ENCODE measurements at regions of chr3 and their contacts with region 1.

Region 1: GRCh38 chr3:122942937-122943827 is 84.4 kb downstream of the SEMA5B start:
- DNase-seq: peak; percentile 72 to 73
- ATAC-seq: peak; percentile 75 to 92 (median 82)
- H3K4me3 ChIP-seq: no peak overlapping the region
- H3K27ac ChIP-seq: peak overlapping the region in 2 of 10 donors; percentile 22 to 48
- H3K4me1 ChIP-seq: peaks cover 0 to 52% (median 25%) of the 10 kb centered on the region in 9 donors
- H3K27me3 ChIP-seq: peaks cover 0 to 4% (median 0%) of the 10 kb centered on the region in 7 donors
- CTCF ChIP-seq: peak; percentile 66 to 96 (median 89)

Region 2: DNA sequence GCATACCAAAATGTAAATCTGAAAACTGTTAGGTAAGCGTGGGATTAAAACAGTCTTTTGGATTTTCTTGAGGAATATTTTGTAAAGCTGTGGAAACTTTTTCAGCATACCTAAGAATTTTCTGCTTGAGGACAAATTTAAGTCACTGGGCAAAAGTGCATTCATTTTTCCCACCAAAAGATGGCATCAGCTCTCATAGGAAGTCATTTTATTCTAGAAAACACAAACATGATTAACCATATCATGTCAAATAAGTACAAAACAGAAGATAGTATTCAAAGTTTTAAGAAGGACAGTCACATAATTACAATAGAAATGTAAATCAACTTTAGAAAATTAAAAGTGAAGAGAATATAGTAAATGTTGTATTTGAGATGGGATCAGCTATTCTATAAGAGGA is 84.8 kb before region 1 on chr3:
- intact Hi-C with region 1: no loop called
- DNase-seq: no peak
- ATAC-seq: no peak
- H3K4me3 ChIP-seq: no peak overlapping the region
- H3K27ac ChIP-seq: no peak overlapping the region
- H3K4me1 ChIP-seq: peaks cover 0 to 3% (median 0%) of the 10 kb centered on the region in 9 donors
- H3K27me3 ChIP-seq: no peaks in the 10 kb centered on the region
- CTCF ChIP-seq: peak in 7 of 9 donors; percentile 16 to 59 (median 50)

Region 3: DNA sequence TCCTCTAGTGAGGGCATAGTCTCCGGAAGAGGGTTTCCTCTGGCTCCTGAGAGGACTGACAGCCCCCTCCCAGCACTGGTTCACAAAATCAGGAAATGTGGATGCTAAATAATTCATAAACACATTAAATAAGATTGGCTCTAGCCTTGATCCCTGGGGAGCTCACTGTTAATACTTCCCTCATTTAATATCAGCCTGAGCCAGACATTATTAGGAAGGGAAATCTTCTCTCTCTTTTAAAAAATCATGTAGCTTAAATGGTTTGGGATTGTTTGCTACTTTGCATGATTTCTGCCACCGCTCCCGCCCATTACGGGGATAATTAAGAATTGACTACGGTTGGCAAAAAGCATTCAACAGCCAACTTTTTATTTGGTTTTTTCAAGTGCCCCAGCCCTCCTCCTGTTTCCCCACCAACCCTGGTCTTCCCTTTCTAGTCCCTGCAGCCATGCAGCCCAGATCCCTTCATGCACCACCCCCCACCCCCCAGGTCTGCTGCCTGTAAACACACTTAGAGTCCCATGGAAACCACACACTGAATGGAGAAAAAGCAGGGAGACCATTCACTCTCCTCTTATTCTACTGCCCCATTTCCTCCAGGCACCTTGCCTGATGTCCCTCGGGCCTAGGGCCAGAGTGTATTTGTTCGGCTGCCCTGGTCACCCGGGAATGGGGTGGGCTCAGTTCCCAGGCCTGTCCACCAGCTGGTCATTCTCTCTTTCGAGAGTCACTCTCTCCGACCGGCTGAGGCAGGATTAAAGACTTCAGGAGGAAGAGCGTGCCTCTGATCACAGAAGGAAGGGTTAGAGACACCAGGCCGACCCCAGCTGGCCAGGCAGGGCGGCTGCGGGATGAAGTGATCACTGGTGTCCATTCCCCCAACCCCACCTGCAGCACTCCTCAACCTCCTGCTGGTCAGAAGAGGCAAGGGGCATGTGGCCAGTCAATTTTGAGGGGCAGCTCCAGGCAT is 39.3 kb after region 1 on chr3:
- intact Hi-C with region 1: loop called in 1 of 10 experiments (anchors 5 kb)
- DNase-seq: peak; percentile 54
- ATAC-seq: peak in 5 of 8 donors; percentile 13 to 56 (median 28)
- H3K4me3 ChIP-seq: no peak overlapping the region
- H3K27ac ChIP-seq: peak overlapping the region in 2 of 10 donors; percentile 22 to 30
- H3K4me1 ChIP-seq: peaks cover 6 to 70% (median 30%) of the 10 kb centered on the region in 9 donors
- H3K27me3 ChIP-seq: no peaks in the 10 kb centered on the region
- CTCF ChIP-seq: peak in 5 of 9 donors; percentile 12 to 39 (median 25)

Region 4: DNA sequence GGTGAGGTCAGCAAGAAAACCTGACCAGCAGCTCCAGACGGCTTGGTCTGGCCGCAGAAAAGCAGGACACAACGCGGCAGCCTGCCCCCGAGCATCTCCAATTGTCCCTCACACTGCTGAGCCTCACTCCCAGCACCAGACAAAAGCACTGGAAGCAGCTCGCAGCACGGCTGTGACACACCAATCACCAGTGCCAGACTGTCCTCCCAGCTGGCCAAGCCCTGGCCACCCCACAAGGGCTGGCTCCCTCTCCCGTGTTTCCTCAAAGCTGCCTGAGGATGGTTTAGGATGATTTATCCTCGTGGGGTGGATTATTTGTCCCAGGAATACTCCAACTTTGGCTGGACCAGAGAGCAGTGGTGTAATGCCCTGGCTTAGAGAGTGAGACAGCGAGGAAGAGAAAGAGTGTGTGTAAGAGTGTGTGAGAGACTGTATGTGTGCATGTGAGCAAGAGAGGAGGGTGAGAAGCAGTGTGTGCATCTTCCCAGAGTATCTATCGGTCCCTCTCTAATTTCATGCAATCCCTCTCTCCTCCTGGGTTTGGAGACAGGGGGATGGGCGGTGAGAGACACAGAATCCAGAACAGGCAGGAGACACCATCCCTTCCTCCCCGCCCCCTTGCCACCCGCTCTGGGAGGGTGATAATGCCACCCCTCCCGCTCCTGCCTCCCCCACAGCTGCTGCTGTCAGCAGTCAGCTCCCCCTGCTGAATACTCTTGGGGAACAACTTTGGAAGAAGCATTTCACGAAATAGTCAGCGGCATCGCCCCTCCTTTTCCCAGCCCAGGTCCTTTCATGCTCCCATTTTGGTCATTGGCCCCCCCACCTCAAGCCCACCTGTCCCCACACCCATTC is 50.2 kb after region 1 on chr3:
- intact Hi-C with region 1: loop called in 1 of 10 experiments (anchors 5 kb)
- DNase-seq: no peak
- ATAC-seq: peak in 5 of 8 donors; percentile 18 to 55 (median 31)
- H3K4me3 ChIP-seq: no peak overlapping the region
- H3K27ac ChIP-seq: no peak overlapping the region
- H3K4me1 ChIP-seq: peaks cover 0 to 56% (median 28%) of the 10 kb centered on the region in 9 donors
- H3K27me3 ChIP-seq: peaks cover 0 to 14% (median 0%) of the 10 kb centered on the region in 7 donors
- CTCF ChIP-seq: no peak

Region 5: GRCh38 chr3:123258811-123259420 is 315.7 kb after region 1 on chr3:
- intact Hi-C with region 1: loop called (anchors 5 to 10 kb)
- DNase-seq: no peak
- ATAC-seq: peak in 5 of 8 donors; percentile 51 to 76 (median 64)
- H3K4me3 ChIP-seq: no peak overlapping the region
- H3K27ac ChIP-seq: no peak overlapping the region
- H3K4me1 ChIP-seq: peaks cover 0 to 10% (median 0%) of the 10 kb centered on the region in 9 donors
- H3K27me3 ChIP-seq: no peaks in the 10 kb centered on the region
- CTCF ChIP-seq: peak in 8 of 9 donors; percentile 36 to 72 (median 64)

Region 6: DNA sequence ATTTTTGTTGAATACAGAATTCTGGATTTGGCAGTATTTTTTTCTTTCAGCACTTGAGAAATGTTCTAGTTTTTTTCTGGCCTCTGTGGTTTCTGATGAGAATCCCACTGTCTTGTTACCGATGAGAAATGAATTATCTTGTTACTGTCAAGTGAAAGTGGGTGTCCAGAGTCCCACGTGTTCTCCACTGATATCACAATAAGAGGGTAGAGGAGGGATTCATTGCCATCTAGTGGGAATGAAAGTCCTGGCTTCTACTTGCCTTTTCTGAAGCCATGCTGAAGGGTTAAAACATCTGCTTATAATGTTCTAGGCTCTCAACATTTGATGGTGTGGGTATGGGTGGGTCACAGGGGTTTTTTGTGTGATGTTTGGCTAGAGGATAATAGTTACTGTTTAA is 324.6 kb after region 1 on chr3:
- intact Hi-C with region 1: loop called in 2 of 10 experiments (anchors 10 kb)
- DNase-seq: no peak
- ATAC-seq: no peak
- H3K4me3 ChIP-seq: no peak overlapping the region
- H3K27ac ChIP-seq: no peak overlapping the region
- H3K4me1 ChIP-seq: peaks cover 0 to 28% (median 8%) of the 10 kb centered on the region in 9 donors
- H3K27me3 ChIP-seq: no peaks in the 10 kb centered on the region
- CTCF ChIP-seq: peak in 2 of 9 donors; percentile 12 to 24

Region 7: DNA sequence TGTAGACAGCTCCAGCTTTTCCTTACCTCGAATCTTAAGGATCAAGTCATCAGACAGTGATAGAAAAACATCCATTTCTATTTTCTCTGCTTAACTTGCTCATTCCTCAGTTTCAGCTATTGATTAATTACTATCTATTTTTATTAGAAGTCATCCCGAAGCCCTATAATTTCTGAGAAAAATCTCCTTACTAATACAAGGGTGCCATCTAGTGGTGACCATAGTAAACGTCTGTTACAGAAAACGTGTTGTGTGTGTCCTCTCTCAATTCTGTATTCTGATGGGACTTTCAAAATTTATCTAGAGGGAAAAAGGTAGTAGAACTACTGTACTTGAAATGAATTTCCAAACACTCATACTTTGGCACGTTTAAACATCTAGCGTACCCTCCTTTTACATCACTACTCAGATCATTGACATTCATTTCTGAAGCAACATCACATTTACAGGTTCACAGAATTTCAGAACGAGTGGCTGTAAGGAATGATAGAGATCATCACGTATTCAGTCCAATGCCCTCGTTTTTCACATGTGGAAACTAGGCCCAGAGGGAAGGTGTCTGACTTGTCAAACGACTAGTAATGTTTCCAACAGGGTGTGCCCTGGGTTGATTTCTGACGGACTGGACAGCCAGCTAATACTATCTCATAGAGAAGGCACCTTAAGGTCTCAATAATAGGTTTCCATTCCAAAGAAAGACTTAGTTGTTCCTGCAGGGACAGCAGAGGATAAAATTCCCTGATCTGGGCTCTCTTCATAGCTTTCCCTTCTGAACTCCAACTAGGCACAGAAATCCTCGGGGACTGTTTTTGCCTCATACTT is 616.1 kb after region 1 on chr3:
- intact Hi-C with region 1: loop called in 1 of 10 experiments (anchors 5 kb)
- DNase-seq: no peak
- ATAC-seq: peak in 2 of 8 donors; percentile 48 to 56
- H3K4me3 ChIP-seq: no peak overlapping the region
- H3K27ac ChIP-seq: no peak overlapping the region
- H3K4me1 ChIP-seq: peaks cover 0 to 3% (median 0%) of the 10 kb centered on the region in 9 donors
- H3K27me3 ChIP-seq: no peaks in the 10 kb centered on the region
- CTCF ChIP-seq: peak; percentile 75 to 93 (median 85)